ENCODE measurements at regions of chr4 and their contacts with region 1.

Region 1: GRCh38 chr4:83217721-83218522 is 66.7 kb downstream of the COQ2 start:
- DNase-seq: peak; percentile 35 to 94 (median 67)
- ATAC-seq: peak; percentile 93
- H3K4me3 ChIP-seq: no peak overlapping the region
- H3K4me3 Mint-ChIP-seq: peak overlapping the region; percentile 55
- H3K27ac ChIP-seq: peak overlapping the region; percentile 68 to 81
- H3K27ac Mint-ChIP-seq: peak overlapping the region; percentile 89
- H3K4me1 ChIP-seq: peaks cover 66% of the 10 kb centered on the region
- H3K4me1 Mint-ChIP-seq: peaks cover 74% of the 10 kb centered on the region
- H3K27me3 ChIP-seq: no peaks in the 10 kb centered on the region
- H3K27me3 Mint-ChIP-seq: no peaks in the 10 kb centered on the region
- CTCF ChIP-seq: no peak

Region 2: DNA sequence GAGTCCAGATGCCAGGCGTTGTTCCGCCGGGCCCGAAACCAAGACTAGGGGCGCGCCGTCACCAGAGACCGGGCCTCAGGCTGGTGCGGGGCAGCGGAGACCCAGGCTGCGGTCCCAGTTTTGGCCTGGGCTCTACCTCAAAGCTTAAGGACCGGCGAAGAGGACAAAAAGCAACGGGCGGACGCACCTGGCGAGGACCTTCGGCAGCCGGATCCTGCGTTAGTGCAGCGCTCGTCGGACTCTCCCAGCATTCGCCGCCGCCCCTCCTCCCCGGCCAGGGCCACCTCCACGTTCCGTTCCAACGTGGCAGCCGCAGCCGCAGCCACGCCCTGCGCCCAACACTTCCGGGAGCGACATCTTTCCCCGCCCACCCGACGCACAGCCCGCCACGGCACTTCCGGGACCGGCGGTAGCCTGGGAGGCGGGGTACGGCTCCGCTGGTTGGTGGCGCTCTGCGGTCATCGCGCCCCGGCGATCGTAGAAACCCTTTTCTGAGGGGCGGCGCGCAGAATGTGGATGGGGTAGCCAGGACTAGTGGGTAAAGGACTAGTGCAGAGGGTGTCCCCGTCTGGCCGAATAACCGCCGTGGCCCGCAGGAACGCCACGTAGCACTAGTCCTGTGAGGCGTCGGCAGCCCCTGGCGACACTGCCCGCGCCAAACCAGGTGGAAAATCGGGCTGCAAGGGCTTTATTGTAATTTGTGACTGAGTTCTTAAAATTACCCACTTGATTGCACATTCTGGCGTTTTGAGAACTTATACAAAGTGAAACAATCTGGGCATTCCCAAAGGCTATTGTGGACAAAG is 326.8 kb before region 1 on chr4 and contains the start of gene SEC31A:
- CTCF ChIA-PET with region 1: interaction called, 3 read pairs
- POLR2A ChIA-PET with region 1: no interaction called
- intact Hi-C with region 1: loop called in 1 of 2 experiments (anchors 1 kb)
- DNase-seq: peak; percentile 93 to 99 (median 97)
- ATAC-seq: peak; percentile 93
- H3K4me3 ChIP-seq: peak within 1 kb of the TSS; percentile 87 to 88
- H3K4me3 Mint-ChIP-seq: peak within 1 kb of the TSS; percentile 89
- H3K27ac ChIP-seq: peak within 1 kb of the TSS; percentile 96
- H3K27ac Mint-ChIP-seq: peak within 1 kb of the TSS; percentile 98
- H3K4me1 ChIP-seq: peaks cover 22% of the 10 kb centered on the region
- H3K4me1 Mint-ChIP-seq: peaks cover 45% of the 10 kb centered on the region
- H3K27me3 ChIP-seq: no peaks in the 10 kb centered on the region
- H3K27me3 Mint-ChIP-seq: no peaks in the 10 kb centered on the region
- CTCF ChIP-seq: no peak
- total RNA-seq, gene SEC31A: 115 to 117 TPM

Region 3: DNA sequence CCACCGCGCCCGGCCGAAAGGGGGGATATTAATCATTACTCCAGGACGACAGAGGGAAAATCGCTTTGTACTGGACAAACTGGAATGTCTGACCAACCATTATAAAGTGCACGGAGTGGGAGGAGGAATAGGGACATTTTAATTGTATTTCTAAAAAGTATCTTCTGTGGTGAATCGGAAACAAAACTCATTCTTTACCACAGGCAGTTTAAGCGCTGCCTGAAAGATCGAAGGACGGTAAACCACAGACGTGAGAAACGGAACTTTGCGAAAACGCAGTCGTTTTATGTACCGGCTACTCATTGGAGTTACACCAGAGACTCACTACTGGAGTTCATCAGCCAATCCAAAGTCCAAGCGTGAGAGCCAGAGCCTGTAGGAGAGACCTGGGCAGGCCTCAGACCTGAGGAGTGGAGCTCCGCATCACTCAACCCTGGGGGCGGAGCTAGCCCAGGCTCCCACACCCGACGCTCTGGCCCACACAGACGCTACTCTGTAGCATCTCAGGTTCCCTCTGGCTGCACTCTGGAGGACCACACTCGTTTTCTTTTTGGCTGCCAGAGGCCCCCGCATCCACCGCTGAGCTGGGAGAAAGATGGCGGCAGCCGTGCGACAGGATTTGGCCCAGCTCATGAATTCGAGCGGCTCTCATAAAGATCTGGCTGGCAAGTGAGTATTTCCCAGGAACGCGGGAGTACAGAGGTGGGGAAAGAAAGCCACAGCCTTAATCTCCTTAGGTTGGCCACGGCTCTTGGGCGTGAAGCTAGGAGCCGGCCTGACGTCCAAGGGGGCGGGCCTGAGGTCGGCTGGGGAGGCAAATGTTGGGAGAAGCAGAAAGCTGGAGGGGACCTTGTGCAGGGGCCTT is 183.1 kb before region 1 on chr4 and contains the start of gene COPS4:
- CTCF ChIA-PET with region 1: no interaction called
- POLR2A ChIA-PET with region 1: interaction called, 3 read pairs
- intact Hi-C with region 1: loop called in 1 of 2 experiments (anchors 1 kb)
- DNase-seq: peak; percentile 87 to 100 (median 94)
- ATAC-seq: peak; percentile 98
- H3K4me3 ChIP-seq: peak within 1 kb of the TSS; percentile 73 to 90
- H3K4me3 Mint-ChIP-seq: peak within 1 kb of the TSS; percentile 99
- H3K27ac ChIP-seq: peak within 1 kb of the TSS; percentile 76 to 92
- H3K27ac Mint-ChIP-seq: peak within 1 kb of the TSS; percentile 99
- H3K4me1 ChIP-seq: peaks cover 16% of the 10 kb centered on the region
- H3K4me1 Mint-ChIP-seq: peaks cover 41% of the 10 kb centered on the region
- H3K27me3 ChIP-seq: no peaks in the 10 kb centered on the region
- H3K27me3 Mint-ChIP-seq: no peaks in the 10 kb centered on the region
- CTCF ChIP-seq: peak; percentile 51
- total RNA-seq, gene COPS4: 32.2 to 35.2 TPM

Region 4: GRCh38 chr4:83240379-83240875 is 22.5 kb after region 1 on chr4:
- CTCF ChIA-PET with region 1: interaction called, 3 read pairs
- POLR2A ChIA-PET with region 1: interaction called, 3 read pairs
- intact Hi-C with region 1: loop called in 1 of 2 experiments (anchors 2 kb)
- DNase-seq: no peak
- ATAC-seq: no peak
- H3K4me3 ChIP-seq: no peak overlapping the region
- H3K4me3 Mint-ChIP-seq: no peak overlapping the region
- H3K27ac ChIP-seq: no peak overlapping the region
- H3K27ac Mint-ChIP-seq: peak overlapping the region; percentile 73
- H3K4me1 ChIP-seq: peaks cover 23% of the 10 kb centered on the region
- H3K4me1 Mint-ChIP-seq: peaks cover 49% of the 10 kb centered on the region
- H3K27me3 ChIP-seq: no peaks in the 10 kb centered on the region
- H3K27me3 Mint-ChIP-seq: no peaks in the 10 kb centered on the region
- CTCF ChIP-seq: no peak

Region 5: DNA sequence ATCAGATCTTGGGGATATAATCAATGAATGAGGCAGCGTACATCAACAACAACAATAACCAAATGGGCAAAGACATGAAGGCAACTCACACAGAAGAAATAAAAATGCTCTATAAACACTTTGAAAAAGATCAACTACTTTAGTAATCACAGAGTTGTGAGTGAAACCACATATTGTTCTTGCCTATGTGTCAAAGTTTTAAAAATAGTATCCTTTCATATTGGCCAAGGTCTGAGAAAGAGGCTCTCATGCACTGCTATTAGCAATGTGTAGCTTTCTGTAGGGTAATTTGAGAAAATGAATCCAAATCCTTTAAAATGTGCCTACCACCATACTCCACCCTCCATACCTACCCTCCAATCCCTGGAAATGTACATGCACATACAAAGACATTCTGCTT is 41.7 kb after region 1 on chr4:
- CTCF ChIA-PET with region 1: interaction called, 15 read pairs
- POLR2A ChIA-PET with region 1: interaction called, 7 read pairs
- intact Hi-C with region 1: no loop called
- DNase-seq: no peak
- ATAC-seq: no peak
- H3K4me3 ChIP-seq: no peak overlapping the region
- H3K4me3 Mint-ChIP-seq: no peak overlapping the region
- H3K27ac ChIP-seq: no peak overlapping the region
- H3K27ac Mint-ChIP-seq: no peak overlapping the region
- H3K4me1 ChIP-seq: peaks cover 6% of the 10 kb centered on the region
- H3K4me1 Mint-ChIP-seq: peaks cover 13% of the 10 kb centered on the region
- H3K27me3 ChIP-seq: no peaks in the 10 kb centered on the region
- H3K27me3 Mint-ChIP-seq: no peaks in the 10 kb centered on the region
- CTCF ChIP-seq: no peak

Region 6: DNA sequence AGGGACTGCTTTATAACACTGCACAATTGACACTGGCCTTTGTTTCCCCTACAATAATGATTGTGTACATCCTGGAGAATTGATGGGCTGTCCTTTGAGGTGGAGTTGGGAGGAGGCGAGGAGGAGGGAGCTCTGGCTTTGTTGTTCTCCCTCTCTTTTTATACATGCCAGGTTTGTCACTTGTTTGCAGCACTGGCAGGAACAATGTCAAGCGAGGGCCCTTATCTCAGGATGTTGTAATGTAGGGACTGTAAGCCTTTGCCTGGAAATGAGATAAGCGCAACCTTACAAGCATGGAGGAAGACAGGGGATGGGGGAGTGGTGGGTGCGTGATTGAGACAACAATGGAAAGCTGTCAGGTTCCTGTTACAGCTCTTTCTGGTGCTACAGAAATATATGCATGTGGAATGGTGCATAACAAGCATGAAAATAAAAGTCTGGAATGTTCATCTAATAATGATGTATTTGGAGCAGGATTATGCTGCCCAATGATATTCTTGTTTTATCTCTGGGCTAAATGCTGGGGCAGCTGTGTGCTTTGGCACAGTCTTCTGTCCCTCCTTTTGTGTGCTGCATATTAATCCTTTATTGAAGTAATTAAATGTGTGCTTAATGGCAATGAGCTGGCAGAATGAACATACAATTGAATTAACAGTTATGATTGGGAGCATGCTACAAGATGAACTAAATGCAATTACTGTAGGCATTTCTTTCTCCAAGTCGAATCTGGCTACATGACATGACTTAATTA is 612.4 kb after region 1 on chr4:
- CTCF ChIA-PET with region 1: no interaction called
- POLR2A ChIA-PET with region 1: no interaction called
- intact Hi-C with region 1: no loop called
- DNase-seq: no peak
- ATAC-seq: no peak
- H3K4me3 ChIP-seq: no peak overlapping the region
- H3K4me3 Mint-ChIP-seq: no peak overlapping the region
- H3K27ac ChIP-seq: no peak overlapping the region
- H3K27ac Mint-ChIP-seq: no peak overlapping the region
- H3K4me1 ChIP-seq: no peaks in the 10 kb centered on the region
- H3K4me1 Mint-ChIP-seq: no peaks in the 10 kb centered on the region
- H3K27me3 ChIP-seq: no peaks in the 10 kb centered on the region
- H3K27me3 Mint-ChIP-seq: no peaks in the 10 kb centered on the region
- CTCF ChIP-seq: no peak